CD14-positive monocyte (primary cell): ENCODE measurements at regions of chr11 and their contacts with region 1.

Region 1: DNA sequence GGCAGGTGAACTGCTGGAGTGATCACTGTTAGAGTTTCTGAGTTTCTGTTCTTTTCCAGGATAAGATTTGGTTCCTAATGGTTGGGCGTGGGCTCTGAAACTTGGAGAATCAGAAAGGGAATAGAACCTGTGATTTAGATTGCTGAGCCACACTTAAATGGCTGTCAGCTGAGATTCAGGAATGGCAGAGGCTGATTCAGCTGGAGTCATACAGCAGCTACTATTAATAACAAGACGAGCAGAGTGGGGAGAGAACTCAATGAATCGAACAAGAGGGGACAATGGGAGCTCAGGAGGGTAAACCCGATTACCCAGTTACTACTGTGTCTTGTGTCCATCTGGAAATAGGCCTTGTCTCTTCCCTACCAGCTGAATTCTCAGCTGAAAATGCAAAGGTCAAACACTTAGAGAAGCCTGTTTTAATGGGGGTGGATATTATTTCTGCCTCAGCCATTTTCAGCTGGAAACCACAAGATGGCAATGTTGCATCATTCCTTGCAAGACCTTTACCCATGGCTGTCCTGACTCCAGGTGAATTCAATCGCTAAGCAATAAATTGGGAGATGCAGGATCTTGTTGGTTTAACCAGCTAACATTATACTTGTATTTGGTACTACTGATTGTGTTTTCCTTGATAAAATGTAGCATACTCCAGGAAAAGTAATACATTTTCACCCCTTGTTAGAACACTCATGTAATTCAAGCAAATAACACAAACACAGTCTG is 104.5 kb upstream of the RAG2 start:
- DNase-seq: peak; percentile 27 to 59 (median 28)
- H3K4me3 ChIP-seq: no peak overlapping the region
- H3K4me3 Mint-ChIP-seq: no peak overlapping the region
- H3K27ac ChIP-seq: no peak overlapping the region
- H3K27ac Mint-ChIP-seq: no peak overlapping the region
- H3K4me1 ChIP-seq: no peaks in the 10 kb centered on the region
- H3K4me1 Mint-ChIP-seq: no peaks in the 10 kb centered on the region
- H3K27me3 ChIP-seq: no peaks in the 10 kb centered on the region
- H3K27me3 Mint-ChIP-seq: peaks cover 0 to 2% (median 2%) of the 10 kb centered on the region in 3 donors
- CTCF ChIP-seq: peak; percentile 84

Region 2: GRCh38 chr11:36746886-36747710 is 44.6 kb after region 1 on chr11:
- intact Hi-C with region 1: loop called (anchors 2 to 5 kb)
- DNase-seq: peak; percentile 84 to 88 (median 84)
- H3K4me3 ChIP-seq: no peak overlapping the region
- H3K4me3 Mint-ChIP-seq: no peak overlapping the region
- H3K27ac ChIP-seq: no peak overlapping the region
- H3K27ac Mint-ChIP-seq: no peak overlapping the region
- H3K4me1 ChIP-seq: no peaks in the 10 kb centered on the region
- H3K4me1 Mint-ChIP-seq: peaks cover 5% of the 10 kb centered on the region
- H3K27me3 ChIP-seq: peaks cover 0 to 2% of the 10 kb centered on the region in 2 donors
- H3K27me3 Mint-ChIP-seq: peaks cover 7 to 14% (median 9%) of the 10 kb centered on the region in 3 donors
- CTCF ChIP-seq: peak; percentile 98

Region 3: GRCh38 chr11:37264783-37265182 is 562.3 kb after region 1 on chr11:
- intact Hi-C with region 1: no loop called
- DNase-seq: no peak
- H3K4me3 ChIP-seq: no peak overlapping the region
- H3K4me3 Mint-ChIP-seq: no peak overlapping the region
- H3K27ac ChIP-seq: no peak overlapping the region
- H3K27ac Mint-ChIP-seq: no peak overlapping the region
- H3K4me1 ChIP-seq: no peaks in the 10 kb centered on the region
- H3K4me1 Mint-ChIP-seq: no peaks in the 10 kb centered on the region
- H3K27me3 ChIP-seq: no peaks in the 10 kb centered on the region
- H3K27me3 Mint-ChIP-seq: no peaks in the 10 kb centered on the region
- CTCF ChIP-seq: no peak